Activated naive CD4-positive, alpha-beta T cell treated with anti-CD3 and anti-CD28 coated beads for 36 hours (primary cell): ENCODE measurements at regions of chr20 and their contacts with region 1.

Region 1: GRCh38 chr20:62900052-62900691 is 26.1 kb downstream of the DIDO1 start:
- DNase-seq: peak; percentile 84
- H3K4me3 Mint-ChIP-seq: no peak overlapping the region
- H3K27ac Mint-ChIP-seq: peak overlapping the region; percentile 72
- H3K4me1 Mint-ChIP-seq: peaks cover 29% of the 10 kb centered on the region
- H3K27me3 Mint-ChIP-seq: no peaks in the 10 kb centered on the region

Region 2: DNA sequence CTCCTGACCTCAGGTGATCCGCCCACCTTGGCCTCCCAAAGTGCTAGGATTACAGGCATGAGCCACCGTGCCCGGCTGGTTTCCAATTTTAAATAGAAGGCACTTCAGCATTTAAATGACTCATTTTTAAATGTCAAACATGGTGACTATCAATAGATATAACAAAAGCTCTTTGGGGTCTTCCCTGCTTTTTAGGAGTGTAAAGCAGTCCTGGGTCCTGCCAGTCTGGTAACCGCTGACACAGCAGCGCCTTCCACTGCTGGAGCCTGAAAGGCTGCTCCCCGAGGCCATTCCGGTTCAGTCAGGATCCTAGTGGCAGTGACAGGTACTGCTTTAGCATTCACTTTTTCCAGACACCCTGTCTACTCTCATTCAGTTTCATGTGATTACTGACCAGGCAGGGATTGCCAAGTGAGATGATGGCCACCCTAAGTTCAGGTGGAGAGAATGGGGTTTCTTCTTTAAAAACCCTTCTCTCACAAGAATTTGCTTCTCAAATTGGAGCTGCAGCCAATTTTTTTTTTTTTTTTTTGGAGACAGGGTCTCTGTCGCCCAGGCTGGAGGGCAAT is 21.0 kb after region 1 on chr20:
- CTCF ChIA-PET with region 1: interaction called, 27 read pairs
- intact Hi-C with region 1: loop called (anchors 1 kb)
- DNase-seq: peak; percentile 84
- H3K4me3 Mint-ChIP-seq: peak overlapping the region; percentile 60
- H3K27ac Mint-ChIP-seq: peak overlapping the region; percentile 81
- H3K4me1 Mint-ChIP-seq: peaks cover 78% of the 10 kb centered on the region
- H3K27me3 Mint-ChIP-seq: no peaks in the 10 kb centered on the region

Region 3: DNA sequence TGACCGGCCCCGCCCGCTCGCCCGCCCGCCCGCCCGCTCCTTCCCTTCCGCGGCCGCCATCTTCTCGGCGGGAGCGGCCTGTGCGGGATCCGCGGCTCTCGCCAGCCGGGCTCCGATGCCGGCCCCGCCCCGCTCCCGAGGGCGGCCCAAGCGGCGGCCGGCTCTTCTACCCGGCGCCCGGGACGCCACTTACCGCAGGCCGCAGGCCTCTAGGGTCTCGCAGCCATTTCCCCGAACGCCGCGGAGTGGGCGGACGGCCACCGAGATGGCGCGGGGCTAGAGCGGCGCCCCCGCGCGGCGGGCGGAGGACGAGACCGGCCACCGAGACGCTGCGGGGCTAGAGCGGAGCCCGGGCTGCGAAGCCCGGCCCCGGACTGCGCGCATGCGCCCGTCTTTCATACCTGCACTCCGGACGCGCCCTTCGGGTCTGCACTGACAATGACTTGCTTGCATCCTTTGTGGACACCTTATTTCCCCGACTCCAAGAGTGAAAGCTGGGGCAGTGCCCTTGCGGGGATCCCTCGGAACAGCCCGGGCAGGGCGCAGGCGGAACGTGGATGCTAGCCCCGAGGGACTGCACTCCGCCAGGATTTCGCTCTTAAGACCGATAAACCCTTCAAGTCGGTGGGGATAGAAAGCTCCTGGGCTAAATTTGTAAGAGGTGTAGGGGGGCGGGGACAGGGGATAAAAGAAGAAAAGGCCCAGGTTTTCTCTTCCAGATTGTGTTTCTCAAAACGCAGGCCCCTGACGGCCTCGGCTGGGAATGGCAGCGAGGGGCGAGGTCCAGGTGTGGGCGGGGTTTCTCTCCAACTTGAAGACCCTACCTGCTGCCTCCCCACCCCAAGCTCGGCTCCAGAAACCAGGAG is 26.3 kb after region 1 on chr20 and contains the start of gene DIDO1:
- CTCF ChIA-PET with region 1: interaction called, 25 read pairs
- intact Hi-C with region 1: loop called (anchors 1 kb)
- DNase-seq: peak; percentile 91
- H3K4me3 Mint-ChIP-seq: peak within 1 kb of the TSS; percentile 86
- H3K27ac Mint-ChIP-seq: peak within 1 kb of the TSS; percentile 91
- H3K4me1 Mint-ChIP-seq: peaks cover 69% of the 10 kb centered on the region
- H3K27me3 Mint-ChIP-seq: no peaks in the 10 kb centered on the region
- total RNA-seq, gene DIDO1: 49.5 to 50.3 TPM

Region 4: GRCh38 chr20:62972270-62973032 is 72.3 kb after region 1 on chr20:
- CTCF ChIA-PET with region 1: interaction called, 3 read pairs
- intact Hi-C with region 1: loop called (anchors 2 kb)
- DNase-seq: peak; percentile 91
- H3K4me3 Mint-ChIP-seq: no peak overlapping the region
- H3K27ac Mint-ChIP-seq: no peak overlapping the region
- H3K4me1 Mint-ChIP-seq: peaks cover 12% of the 10 kb centered on the region
- H3K27me3 Mint-ChIP-seq: peaks cover 29% of the 10 kb centered on the region